Activated T-helper 1 cell treated with anti-CD3 and anti-CD28 coated beads, Interleukin-12 subunit alpha, Interleukin-12 subunit beta, Interleukin-2, Interleukin-4 antibody, amounts not matched to agents 30 ng/mL and 10 ng/mL and 1 ng/mL, durations not matched to agents 14 hours and 24 hours and 36 hours (primary cell): ENCODE measurements at regions of chr6 and their contacts with region 1.

Region 1: GRCh38 chr6:144482142-144482541 is 197.0 kb downstream of the UTRN start:
- DNase-seq: peak; percentile 48
- H3K4me3 Mint-ChIP-seq: no peak overlapping the region
- H3K27ac Mint-ChIP-seq: no peak overlapping the region
- H3K4me1 Mint-ChIP-seq: peaks cover 15% of the 10 kb centered on the region
- H3K27me3 Mint-ChIP-seq: no peaks in the 10 kb centered on the region

Region 2: DNA sequence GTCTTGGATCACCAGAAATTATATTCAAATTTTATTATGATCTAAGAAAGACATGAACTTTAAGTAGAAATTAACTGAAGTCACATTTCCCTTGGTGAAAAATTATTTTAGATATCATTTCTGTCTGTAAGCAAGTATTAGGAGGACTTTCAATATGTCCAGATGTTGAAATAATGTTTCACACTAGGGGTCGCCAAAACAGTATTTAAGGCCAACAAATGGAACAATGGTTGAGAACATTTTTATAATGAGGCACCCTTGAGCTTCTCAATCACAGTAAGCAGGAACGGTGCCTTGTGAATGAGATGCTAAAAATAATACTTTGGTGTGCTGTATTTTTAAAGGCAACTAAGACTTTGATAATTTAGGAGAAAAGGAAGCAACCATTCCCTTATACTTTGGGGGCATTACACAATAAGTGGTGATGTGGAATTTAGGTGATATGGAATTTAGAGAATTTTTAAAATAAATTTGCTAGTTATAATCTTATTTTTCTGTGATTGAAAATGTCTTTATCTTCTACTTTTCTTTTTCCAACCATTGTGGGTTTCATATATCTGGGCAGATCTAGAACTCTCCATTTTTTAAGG is 377.1 kb before region 1 on chr6:
- intact Hi-C with region 1: loop called (anchors 1 kb)
- DNase-seq: peak; percentile 25
- H3K4me3 Mint-ChIP-seq: no peak overlapping the region
- H3K27ac Mint-ChIP-seq: no peak overlapping the region
- H3K4me1 Mint-ChIP-seq: peaks cover 13% of the 10 kb centered on the region
- H3K27me3 Mint-ChIP-seq: peaks cover 7% of the 10 kb centered on the region

Region 3: GRCh38 chr6:144262470-144263369 is 219.4 kb before region 1 on chr6:
- intact Hi-C with region 1: loop called (anchors 1 kb)
- DNase-seq: no peak
- H3K4me3 Mint-ChIP-seq: no peak overlapping the region
- H3K27ac Mint-ChIP-seq: no peak overlapping the region
- H3K4me1 Mint-ChIP-seq: no peaks in the 10 kb centered on the region
- H3K27me3 Mint-ChIP-seq: peaks cover 8% of the 10 kb centered on the region

Region 4: GRCh38 chr6:144343701-144344428 is 138.3 kb before region 1 on chr6:
- intact Hi-C with region 1: loop called (anchors 2 kb)
- DNase-seq: peak; percentile 36
- H3K4me3 Mint-ChIP-seq: peak overlapping the region; percentile 96
- H3K27ac Mint-ChIP-seq: peak overlapping the region; percentile 98
- H3K4me1 Mint-ChIP-seq: peaks cover 65% of the 10 kb centered on the region
- H3K27me3 Mint-ChIP-seq: no peaks in the 10 kb centered on the region

Region 5: GRCh38 chr6:145214570-145214969 is 732.4 kb after region 1 on chr6:
- intact Hi-C with region 1: loop called (anchors 2 kb)
- DNase-seq: no peak
- H3K4me3 Mint-ChIP-seq: no peak overlapping the region
- H3K27ac Mint-ChIP-seq: no peak overlapping the region
- H3K4me1 Mint-ChIP-seq: peaks cover 12% of the 10 kb centered on the region
- H3K27me3 Mint-ChIP-seq: peaks cover 4% of the 10 kb centered on the region

Region 6: DNA sequence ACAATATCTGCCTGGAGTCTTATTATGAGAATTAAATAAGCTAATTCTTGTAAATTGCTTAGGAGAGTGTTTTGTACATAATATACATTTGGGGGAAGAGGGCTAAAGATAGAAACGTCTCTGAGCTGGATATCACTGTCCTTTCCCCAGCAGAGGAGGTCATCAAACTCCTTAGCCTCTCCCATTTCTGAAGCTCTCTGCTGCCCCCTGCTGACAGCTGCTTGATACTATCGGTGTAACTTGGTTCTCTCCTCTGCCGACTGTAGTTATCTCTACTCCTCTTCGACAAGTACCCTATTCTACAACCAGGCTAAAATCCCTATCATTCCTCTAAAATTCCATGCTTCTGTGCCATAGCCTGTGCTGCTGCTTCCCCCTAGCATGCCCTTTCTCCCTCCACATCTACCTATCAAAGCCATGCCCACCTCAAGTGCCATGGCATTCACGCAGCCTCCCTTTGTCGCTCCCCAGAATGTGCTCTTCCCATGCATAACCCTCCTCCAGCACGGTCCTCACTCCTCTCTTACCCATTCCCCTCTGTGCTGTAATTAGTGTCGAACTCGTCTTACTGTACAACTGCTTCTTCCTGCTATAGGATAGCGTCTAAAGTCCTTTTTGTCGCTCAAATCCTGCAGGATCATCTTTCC is 1152.0 kb after region 1 on chr6:
- intact Hi-C with region 1: loop called (anchors 5 kb)
- DNase-seq: peak; percentile 52
- H3K4me3 Mint-ChIP-seq: no peak overlapping the region
- H3K27ac Mint-ChIP-seq: no peak overlapping the region
- H3K4me1 Mint-ChIP-seq: peaks cover 9% of the 10 kb centered on the region
- H3K27me3 Mint-ChIP-seq: peaks cover 5% of the 10 kb centered on the region